ENCODE measurements at regions of chr2 and their contacts with region 1.

Region 1: GRCh38 chr2:237434866-237435311 is 20.9 kb upstream of the COL6A3 start:
- DNase-seq: peak; percentile 72
- ATAC-seq: peak; percentile 7
- H3K4me3 ChIP-seq: peak overlapping the region; percentile 61
- H3K27ac ChIP-seq: peak overlapping the region; percentile 100
- H3K4me1 ChIP-seq: peaks cover 68% of the 10 kb centered on the region
- H3K27me3 ChIP-seq: no peaks in the 10 kb centered on the region
- CTCF ChIP-seq: no peak

Region 2: DNA sequence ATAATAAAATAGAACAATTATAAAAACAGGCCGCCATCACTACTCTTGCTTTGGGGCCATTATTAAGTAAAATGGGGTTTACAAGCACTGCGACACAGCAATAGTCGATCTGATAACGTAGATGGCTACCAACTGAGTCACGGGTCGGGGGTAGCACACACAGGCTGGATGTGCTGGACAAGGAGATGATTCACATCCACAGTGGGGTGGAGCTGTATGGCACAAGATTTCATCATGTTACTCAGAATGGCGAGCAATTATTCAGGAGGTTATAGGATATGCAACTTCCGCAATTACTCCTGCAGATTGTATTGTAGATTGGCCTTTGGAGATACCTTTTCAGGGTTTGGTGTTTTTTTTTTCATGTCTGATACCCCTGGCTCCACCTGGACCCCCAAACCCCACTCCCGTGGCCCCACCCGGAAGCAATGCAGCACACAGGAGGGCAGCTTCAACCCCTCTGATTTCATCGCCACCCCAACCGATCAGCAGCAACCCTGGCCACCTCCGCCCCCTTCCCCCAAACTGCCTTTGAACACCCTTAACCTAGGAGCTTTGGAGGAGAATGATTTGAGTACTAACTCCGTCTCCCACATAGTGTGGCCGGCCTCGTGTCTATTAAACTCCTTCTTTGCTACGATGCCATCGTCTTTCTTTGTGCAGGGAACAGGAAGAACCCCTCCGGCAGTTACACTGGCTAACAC is 30.8 kb after region 1 on chr2:
- CTCF ChIA-PET with region 1: interaction called, 3 read pairs
- POLR2A ChIA-PET with region 1: no interaction called
- intact Hi-C with region 1: loop called (anchors 1 kb)
- DNase-seq: peak; percentile 93
- ATAC-seq: peak; percentile 96
- H3K4me3 ChIP-seq: no peak overlapping the region
- H3K27ac ChIP-seq: peak overlapping the region; percentile 94
- H3K4me1 ChIP-seq: peaks cover 21% of the 10 kb centered on the region
- H3K27me3 ChIP-seq: no peaks in the 10 kb centered on the region
- CTCF ChIP-seq: no peak

Region 3: DNA sequence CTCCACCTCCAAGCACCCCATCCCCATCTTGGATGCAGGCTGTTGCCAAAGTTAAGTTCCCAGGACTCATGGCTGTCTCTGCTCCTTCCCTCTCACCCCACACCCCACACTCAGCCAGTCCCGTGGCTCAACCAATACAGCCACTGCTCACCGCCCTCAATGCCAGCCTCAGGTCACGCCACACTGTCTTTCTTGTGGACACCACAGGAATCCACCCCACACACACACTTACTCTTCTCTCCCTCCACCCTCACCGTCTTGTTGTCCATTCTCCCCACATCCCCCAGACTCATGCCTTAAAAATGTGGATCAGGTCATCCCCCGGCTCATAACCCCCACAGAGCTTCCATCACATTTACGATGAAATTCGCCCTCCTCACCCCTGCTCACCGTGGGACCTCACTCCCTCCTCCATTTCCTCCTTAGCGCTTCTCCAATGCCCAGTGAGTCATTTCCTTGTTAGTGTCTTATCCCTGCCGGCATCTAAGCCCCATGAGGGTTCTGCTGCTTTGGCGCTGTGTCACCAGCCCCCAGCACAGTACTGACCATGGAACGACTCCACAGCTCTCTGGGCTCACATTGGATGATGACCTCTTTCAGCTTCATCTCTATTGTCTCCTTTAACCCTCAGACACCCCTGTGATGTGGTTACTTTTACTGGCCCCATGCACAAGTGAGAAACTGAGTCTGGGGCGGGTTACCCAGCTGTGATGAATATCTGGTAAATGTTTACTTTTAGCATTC is 66.0 kb after region 1 on chr2:
- CTCF ChIA-PET with region 1: interaction called, 3 read pairs
- POLR2A ChIA-PET with region 1: interaction called, 4 read pairs
- intact Hi-C with region 1: loop called (anchors 2 kb)
- DNase-seq: peak; percentile 98
- ATAC-seq: peak; percentile 71
- H3K4me3 ChIP-seq: no peak overlapping the region
- H3K27ac ChIP-seq: peak overlapping the region; percentile 100
- H3K4me1 ChIP-seq: peaks cover 52% of the 10 kb centered on the region
- H3K27me3 ChIP-seq: no peaks in the 10 kb centered on the region
- CTCF ChIP-seq: no peak

Region 4: GRCh38 chr2:237590272-237591140 is 155.6 kb after region 1 on chr2 and contains the start of gene RAB17:
- CTCF ChIA-PET with region 1: no interaction called
- POLR2A ChIA-PET with region 1: no interaction called
- intact Hi-C with region 1: no loop called
- DNase-seq: peak; percentile 65
- ATAC-seq: peak; percentile 80
- H3K4me3 ChIP-seq: peak within 1 kb of the TSS; percentile 71
- H3K27ac ChIP-seq: peak within 1 kb of the TSS; percentile 87
- H3K4me1 ChIP-seq: peaks cover 14% of the 10 kb centered on the region
- H3K27me3 ChIP-seq: no peaks in the 10 kb centered on the region
- CTCF ChIP-seq: no peak
- total RNA-seq, gene RAB17: 28.9 and 52.2 TPM in 2 replicates

Measured in PC-3 (cell line).